ENCODE measurements at regions of chr17 and their contacts with region 1.

Region 1: DNA sequence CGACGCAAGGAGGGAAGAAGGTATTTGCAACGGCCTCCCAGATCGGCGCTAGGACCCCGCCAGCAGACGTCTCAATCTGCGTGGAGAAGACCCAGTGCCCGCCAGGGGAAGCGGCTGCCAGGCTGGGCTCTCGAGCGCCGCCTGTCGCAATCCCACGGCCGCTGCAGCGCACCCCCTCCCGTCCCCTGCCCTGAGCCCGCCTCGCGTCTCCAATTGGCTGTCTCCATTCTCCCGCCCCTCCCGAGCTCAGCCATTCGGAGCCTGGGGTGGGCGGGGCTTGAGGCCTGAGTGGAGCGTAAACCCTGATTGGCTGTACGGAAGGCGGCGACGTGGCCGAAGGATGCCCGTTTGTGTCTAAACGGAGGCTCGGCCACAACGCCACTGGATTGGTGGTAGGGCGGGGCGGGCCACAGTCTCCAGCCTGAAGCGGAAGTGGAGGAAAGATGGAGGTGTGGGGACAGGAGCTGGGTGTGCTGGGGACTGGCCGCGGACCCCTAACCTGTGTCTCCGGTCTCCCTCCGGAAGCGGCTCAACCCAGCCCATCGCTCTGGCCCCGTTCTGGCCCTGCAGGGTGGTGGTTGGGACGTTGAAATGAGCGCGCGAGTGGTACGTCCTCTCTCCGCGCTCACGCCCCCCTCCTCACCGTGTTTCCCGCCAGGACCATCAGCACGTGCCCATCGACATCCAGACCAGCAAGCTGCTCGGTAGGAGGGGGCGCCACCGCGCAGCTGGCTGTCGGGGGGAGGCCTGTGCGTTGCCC is at the start of gene CDK5RAP3:
- DNase-seq: peak; percentile 99
- CTCF ChIP-seq: peak; percentile 86

Region 2: GRCh38 chr17:47895856-47896671 is 74.8 kb before region 1 on chr17 and contains the start of gene SP2:
- CTCF ChIA-PET with region 1: interaction called, 10 read pairs
- POLR2A ChIA-PET with region 1: no interaction called
- DNase-seq: peak; percentile 99
- CTCF ChIP-seq: no peak

Region 3: GRCh38 chr17:47941236-47941994 is 29.5 kb before region 1 on chr17 and contains the start of gene PNPO:
- CTCF ChIA-PET with region 1: interaction called, 584 read pairs
- POLR2A ChIA-PET with region 1: interaction called, 4 read pairs
- DNase-seq: peak; percentile 96
- CTCF ChIP-seq: no peak

Region 4: DNA sequence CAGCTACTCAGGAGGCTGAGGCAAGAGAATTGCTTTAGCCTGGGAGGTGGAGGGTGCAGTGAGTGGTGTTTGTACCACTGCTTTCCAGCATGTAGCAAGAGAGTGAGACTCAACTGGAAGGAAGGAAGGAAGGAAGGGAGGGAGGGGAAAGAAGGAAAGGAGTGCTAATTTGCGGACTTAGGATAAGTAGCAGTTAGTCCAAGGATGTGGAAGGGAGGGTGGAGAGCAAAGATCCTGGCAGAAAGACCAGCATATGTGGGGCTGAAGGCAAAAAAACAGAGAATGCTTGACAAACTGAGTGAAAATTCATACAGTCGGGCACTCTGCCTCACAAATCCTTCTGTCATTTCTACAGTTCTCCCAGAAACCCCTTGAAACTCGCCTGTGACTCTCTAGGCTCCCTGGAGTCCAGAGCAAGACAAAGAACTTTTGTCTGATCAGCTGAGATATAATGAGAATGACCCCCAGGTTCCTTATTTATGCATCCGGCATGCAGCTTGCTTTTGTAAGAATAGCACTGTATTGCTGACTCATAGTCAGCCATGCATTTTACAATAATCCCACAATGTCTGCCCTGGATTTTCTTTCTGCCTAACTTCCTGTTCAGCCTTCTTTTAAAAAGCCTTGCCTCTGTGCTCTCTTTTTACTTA is 31.5 kb after region 1 on chr17:
- CTCF ChIA-PET with region 1: interaction called, 40 read pairs
- POLR2A ChIA-PET with region 1: interaction called, 3 read pairs
- DNase-seq: peak; percentile 68
- CTCF ChIP-seq: no peak

Region 5: DNA sequence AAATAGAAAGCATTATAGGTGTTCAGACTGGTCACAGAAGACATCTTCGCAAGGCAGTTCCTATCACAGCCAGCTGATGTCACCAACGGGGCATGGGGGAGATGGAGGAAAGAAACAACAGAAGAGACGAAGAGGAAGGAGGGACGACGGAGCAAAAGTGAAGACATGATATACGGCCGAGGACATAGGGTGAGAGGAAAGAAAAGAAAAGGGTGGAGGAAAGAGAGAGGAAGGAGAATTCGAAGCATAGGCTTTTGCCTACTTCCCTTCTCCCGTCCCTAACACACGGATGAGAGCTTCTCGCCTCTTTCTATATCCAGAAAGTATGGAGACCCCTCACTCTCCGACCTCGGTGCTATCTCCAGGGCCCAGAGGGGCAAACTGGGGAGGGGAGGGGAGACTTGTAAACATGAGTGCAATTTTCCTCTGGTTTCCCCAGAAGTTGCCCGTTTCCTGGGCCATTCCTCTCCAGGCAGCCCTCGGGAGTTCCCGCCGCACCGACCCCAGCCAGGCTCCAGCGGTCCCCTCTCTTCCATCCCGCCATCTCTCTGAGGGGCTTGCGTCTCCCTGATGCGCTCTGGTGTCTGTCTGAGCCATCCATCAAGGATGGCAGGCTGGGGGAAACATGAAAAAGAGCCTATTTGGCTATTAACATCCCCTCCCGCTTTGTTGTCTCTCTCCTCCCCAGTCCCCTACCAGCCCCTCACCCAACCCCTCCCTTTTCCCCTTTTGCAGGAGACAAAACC is 40.7 kb after region 1 on chr17:
- CTCF ChIA-PET with region 1: interaction called, 305 read pairs
- POLR2A ChIA-PET with region 1: interaction called, 3 read pairs
- DNase-seq: peak; percentile 73
- CTCF ChIP-seq: peak; percentile 66

Region 6: DNA sequence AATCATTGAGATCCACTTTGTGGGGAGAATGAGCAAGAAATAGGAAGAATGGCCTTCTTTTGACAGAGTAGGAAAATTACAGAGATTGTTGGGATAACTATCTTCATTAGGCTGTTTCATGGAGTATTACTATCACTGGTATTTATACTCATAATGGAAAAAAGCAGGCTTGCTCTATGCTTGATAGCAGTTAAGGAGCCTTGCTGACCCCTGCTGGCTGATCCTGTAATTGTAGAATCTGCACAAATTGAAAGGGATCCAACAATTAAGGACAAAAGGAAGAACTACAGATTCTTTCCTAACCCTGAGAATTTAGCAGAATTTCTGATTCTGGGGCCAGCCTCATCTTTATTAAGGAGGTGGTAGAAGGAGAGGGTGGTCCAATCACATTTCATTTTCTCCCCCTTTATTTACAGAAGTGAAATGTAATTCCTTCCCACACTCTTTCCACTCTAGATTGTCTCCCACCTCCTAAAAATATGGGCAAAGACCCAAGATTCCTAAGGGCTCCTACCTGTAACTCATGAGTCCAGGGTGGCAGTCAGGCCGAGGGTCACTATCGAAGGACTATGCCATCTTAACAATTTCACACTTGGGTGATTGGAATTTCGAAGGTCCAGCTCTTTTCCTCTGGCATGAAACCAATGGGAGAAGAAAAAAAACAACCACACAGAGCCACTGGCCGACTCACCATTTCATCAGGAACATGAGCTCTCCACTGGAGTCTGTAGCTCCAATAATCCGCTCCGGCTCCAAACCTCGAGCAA is 103.6 kb after region 1 on chr17:
- CTCF ChIA-PET with region 1: no interaction called
- POLR2A ChIA-PET with region 1: no interaction called
- DNase-seq: peak; percentile 64
- CTCF ChIP-seq: peak; percentile 81